Caco-2 (cell line): ENCODE measurements at regions of chr1 and their contacts with region 1.

Region 1: GRCh38 chr1:229558571-229559335 is at the start of gene ABCB10:
- DNase-seq: peak; percentile 97 to 99
- H3K4me3 ChIP-seq: peak within 1 kb of the TSS; percentile 65
- H3K4me3 Mint-ChIP-seq: peak within 1 kb of the TSS; percentile 88
- H3K27ac Mint-ChIP-seq: peak within 1 kb of the TSS; percentile 78
- H3K4me1 ChIP-seq: peaks cover 7% of the 10 kb centered on the region; the same call in 1 of the 2 replicates
- H3K4me1 Mint-ChIP-seq: peaks cover 18% of the 10 kb centered on the region
- H3K27me3 ChIP-seq: no peaks in the 10 kb centered on the region
- H3K27me3 Mint-ChIP-seq: no peaks in the 10 kb centered on the region
- CTCF ChIP-seq: peak; percentile 77 to 88
- total RNA-seq, gene ABCB10: 27.5 and 31.9 TPM in 2 replicates

Region 2: DNA sequence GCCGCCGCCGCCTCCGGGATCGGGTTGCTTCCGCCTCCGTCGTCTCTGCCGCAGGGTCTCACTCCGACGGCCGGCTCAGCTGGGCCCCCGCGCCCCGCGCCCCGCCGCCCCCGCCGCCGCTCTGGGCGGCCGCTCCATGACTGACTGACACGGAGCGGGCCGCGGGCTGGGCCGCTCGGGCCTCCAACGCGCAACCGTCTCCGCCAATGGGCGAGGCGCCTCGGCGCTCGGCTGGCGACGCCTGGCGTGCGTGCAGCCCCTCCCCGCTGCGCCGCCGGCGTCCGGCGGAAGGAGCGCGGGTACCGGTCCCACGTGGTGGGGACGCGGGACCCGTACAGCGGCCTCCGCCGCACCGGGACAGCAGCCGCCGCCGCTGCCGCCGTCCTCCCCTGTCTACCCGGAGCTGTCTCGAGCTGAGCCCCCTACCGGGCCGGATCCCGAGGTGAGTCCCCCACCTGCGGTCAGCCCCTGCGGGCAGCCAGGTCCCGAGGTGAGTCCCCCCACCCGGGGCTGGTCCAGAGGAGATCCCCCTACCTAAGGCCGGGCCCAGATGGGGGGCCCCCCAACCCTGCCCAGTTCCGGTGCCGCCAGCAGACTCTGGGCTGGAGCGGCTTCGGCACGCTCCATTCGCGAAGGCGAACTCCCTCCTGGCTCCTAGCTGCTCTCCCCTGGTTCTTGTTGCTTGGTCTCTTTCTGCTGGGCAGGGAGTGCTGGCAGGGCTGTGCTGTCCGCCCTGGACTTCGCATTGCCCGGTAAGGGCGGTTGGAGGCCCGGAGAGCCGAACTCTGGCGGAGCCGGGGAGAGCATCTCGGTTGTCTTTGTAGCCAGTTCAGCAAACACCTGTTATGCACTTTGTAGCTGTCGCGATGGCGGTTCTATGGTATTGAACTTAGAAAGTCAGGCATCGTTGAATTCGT is 67.4 kb after region 1 on chr1 and contains the starts of genes TAF5L and URB2:
- CTCF ChIA-PET with region 1: interaction called, 12 read pairs
- POLR2A ChIA-PET with region 1: interaction called, 6 read pairs
- intact Hi-C with region 1: loop called (anchors 1 kb)
- DNase-seq: peak; percentile 91 to 93
- H3K4me3 ChIP-seq: peak within 1 kb of the TSS; percentile 94
- H3K4me3 Mint-ChIP-seq: peak within 1 kb of the TSS; percentile 99
- H3K27ac Mint-ChIP-seq: peak within 1 kb of the TSS; percentile 89
- H3K4me1 ChIP-seq: peaks cover 5% of the 10 kb centered on the region; the same call in 1 of the 2 replicates
- H3K4me1 Mint-ChIP-seq: peaks cover 14% of the 10 kb centered on the region
- H3K27me3 ChIP-seq: no peaks in the 10 kb centered on the region
- H3K27me3 Mint-ChIP-seq: no peaks in the 10 kb centered on the region
- CTCF ChIP-seq: no peak
- total RNA-seq, gene TAF5L: 20.6 and 23.8 TPM in 2 replicates
- total RNA-seq, gene URB2: 19.7 and 21.4 TPM in 2 replicates

Region 3: GRCh38 chr1:230119340-230119739 is 560.6 kb after region 1 on chr1:
- CTCF ChIA-PET with region 1: interaction called, 13 read pairs
- POLR2A ChIA-PET with region 1: no interaction called
- intact Hi-C with region 1: no loop called
- DNase-seq: no peak
- H3K4me3 ChIP-seq: no peak overlapping the region
- H3K4me3 Mint-ChIP-seq: no peak overlapping the region
- H3K27ac Mint-ChIP-seq: no peak overlapping the region
- H3K4me1 ChIP-seq: peaks cover 8% of the 10 kb centered on the region
- H3K4me1 Mint-ChIP-seq: peaks cover 11% of the 10 kb centered on the region
- H3K27me3 ChIP-seq: no peaks in the 10 kb centered on the region
- H3K27me3 Mint-ChIP-seq: no peaks in the 10 kb centered on the region
- CTCF ChIP-seq: no peak